ENCODE measurements at regions of chr7 and their contacts with region 1.

Region 1: DNA sequence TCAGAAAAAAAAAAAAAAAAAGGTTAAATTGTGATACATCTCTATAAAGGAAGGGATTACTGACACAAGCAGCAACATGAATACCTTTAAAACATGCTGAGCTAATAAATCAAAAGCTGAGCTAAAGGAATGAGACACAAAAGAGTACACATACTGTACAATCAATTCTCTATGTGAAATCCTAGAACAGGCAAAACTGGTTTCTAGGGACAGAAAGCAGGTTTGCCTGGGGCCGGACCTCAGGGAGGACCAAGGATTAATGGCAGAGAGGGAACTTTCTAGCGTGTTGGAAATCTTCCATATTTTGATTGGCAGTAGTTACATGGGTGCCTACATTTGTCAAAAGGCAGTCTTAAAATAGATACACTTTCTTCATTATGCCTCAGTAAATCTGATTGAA is 52.5 kb downstream of the KLRG2 start:
- DNase-seq: no peak
- H3K4me3 Mint-ChIP-seq: no peak overlapping the region
- H3K27ac Mint-ChIP-seq: no peak overlapping the region
- H3K4me1 Mint-ChIP-seq: peaks cover 5% of the 10 kb centered on the region
- H3K27me3 Mint-ChIP-seq: no peaks in the 10 kb centered on the region

Region 2: GRCh38 chr7:139446036-139446881 is 15.2 kb after region 1 on chr7:
- CTCF ChIA-PET with region 1: interaction called, 10 read pairs
- intact Hi-C with region 1: no loop called
- DNase-seq: no peak
- H3K4me3 Mint-ChIP-seq: no peak overlapping the region
- H3K27ac Mint-ChIP-seq: no peak overlapping the region
- H3K4me1 Mint-ChIP-seq: no peaks in the 10 kb centered on the region
- H3K27me3 Mint-ChIP-seq: no peaks in the 10 kb centered on the region

Region 3: GRCh38 chr7:139482662-139483469 is 51.9 kb after region 1 on chr7:
- CTCF ChIA-PET with region 1: interaction called, 7 read pairs
- intact Hi-C with region 1: loop called (anchors 5 kb)
- DNase-seq: peak; percentile 49
- H3K4me3 Mint-ChIP-seq: peak overlapping the region; percentile 43
- H3K27ac Mint-ChIP-seq: no peak overlapping the region
- H3K4me1 Mint-ChIP-seq: peaks cover 2% of the 10 kb centered on the region
- H3K27me3 Mint-ChIP-seq: peaks cover 33% of the 10 kb centered on the region

Measured in activated naive CD4-positive, alpha-beta T cell treated with anti-CD3 and anti-CD28 coated beads for 36 hours (primary cell).